Posterior vena cava (tissue), 2 donors: ENCODE measurements at regions of chr1 and their contacts with region 1.

Region 1: GRCh38 chr1:77683160-77684148 is 996 bp upstream of the ZZZ3 start:
- DNase-seq: peak; percentile 97

Region 2: GRCh38 chr1:76160225-76160624 is 1523.2 kb before region 1 on chr1:
- intact Hi-C with region 1: loop called in 1 of 2 experiments (anchors 10 kb)
- DNase-seq: no peak

Region 3: GRCh38 chr1:78617615-78618026 is 934.2 kb after region 1 on chr1:
- intact Hi-C with region 1: no loop called
- DNase-seq: peak; percentile 77